OCI-LY7 (cell line): ENCODE measurements at regions of chr10 and their contacts with region 1.

Region 1: DNA sequence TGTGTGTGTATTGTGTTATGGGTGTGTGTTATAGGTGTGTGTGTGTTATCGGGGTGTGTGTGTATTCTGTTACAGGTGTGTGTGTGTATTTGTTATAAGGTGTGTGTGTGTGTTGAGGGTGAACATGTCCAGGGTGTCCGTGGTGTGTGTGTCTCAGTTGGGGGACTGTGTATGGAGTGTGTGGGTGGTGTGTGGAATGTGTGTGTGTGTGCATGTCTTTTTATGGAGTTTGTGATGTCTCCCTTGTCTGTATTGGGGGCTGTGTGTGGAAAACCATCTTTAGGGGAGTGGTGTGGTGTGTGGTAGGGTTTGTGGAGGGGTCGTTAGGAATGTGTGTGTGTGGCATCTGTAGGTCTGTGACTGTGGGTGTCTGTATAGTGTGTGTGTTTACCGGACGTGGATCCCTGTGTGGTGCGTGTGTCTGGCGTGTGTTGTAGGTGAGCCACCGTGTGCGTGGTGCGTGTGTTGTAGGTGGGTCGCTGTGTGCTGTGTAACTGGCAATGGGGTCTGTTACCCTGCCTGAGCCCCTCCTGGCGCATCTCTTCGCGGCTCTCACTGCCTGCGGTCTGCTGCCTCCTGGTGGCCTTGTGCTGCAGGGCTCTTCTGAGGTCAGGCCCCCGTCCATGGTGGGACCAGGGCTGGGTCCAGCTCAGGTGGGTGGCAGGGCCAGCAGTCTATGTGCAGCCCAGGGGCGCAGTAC is 61.7 kb downstream of the PALD1 start:
- DNase-seq: no peak
- H3K4me3 ChIP-seq: no peak overlapping the region
- H3K27ac ChIP-seq: no peak overlapping the region
- H3K4me1 ChIP-seq: peaks cover 38% of the 10 kb centered on the region
- CTCF ChIP-seq: peak; percentile 78

Region 2: DNA sequence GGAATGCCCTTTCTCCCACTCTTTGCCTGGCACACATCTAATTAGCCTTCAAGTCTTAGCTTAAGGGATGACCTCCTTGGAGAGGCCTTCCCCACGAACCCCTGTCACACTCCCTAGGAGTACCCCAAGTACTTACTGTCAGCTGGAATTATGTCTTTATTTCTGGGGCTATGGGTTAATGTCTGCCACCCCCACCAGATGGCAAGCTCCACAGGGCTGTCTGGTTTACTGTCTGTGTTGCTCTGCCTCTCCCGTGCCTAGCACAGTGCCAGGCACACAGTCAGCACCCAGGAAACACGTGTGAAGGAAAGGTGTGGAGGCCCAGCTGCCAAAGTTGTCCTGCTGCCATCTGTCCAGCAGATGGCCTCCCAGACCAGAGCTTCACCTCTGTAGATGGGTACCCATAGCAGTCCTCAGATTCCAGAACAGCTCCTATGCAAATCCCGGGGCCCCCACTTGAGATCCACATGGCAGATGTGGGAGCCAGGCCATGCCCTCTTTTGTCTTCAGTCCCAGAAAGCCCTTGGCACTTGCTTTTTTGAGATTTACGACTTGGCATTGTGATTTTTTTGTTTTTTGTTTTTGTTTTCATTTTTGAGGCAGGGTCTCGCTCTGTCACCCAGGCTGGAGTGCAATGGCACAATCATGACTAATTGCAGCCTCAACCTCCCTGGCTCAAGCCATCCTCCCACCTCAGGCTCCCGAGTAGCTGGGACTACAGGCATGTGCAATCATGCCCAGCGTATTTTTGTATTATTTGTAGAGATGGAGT is 78.8 kb before region 1 on chr10:
- CTCF ChIA-PET with region 1: interaction called, 3 read pairs
- POLR2A ChIA-PET with region 1: no interaction called
- intact Hi-C with region 1: loop called (anchors 1 kb)
- DNase-seq: peak; percentile 74
- H3K4me3 ChIP-seq: no peak overlapping the region
- H3K27ac ChIP-seq: no peak overlapping the region
- H3K4me1 ChIP-seq: no peaks in the 10 kb centered on the region
- CTCF ChIP-seq: peak; percentile 92

Region 3: GRCh38 chr10:70478191-70479164 is 61.8 kb before region 1 on chr10 and contains the start of gene PALD1:
- CTCF ChIA-PET with region 1: interaction called, 3 read pairs
- POLR2A ChIA-PET with region 1: interaction called, 4 read pairs
- intact Hi-C with region 1: loop called (anchors 1 kb)
- DNase-seq: peak; percentile 81
- H3K4me3 ChIP-seq: peak within 1 kb of the TSS; percentile 95
- H3K27ac ChIP-seq: peak within 1 kb of the TSS; percentile 74
- H3K4me1 ChIP-seq: peaks cover 62% of the 10 kb centered on the region
- CTCF ChIP-seq: no peak
- total RNA-seq, gene PALD1: 41.6 and 52.7 TPM in 2 replicates

Region 4: GRCh38 chr10:70551971-70552422 is 11.8 kb after region 1 on chr10:
- CTCF ChIA-PET with region 1: no interaction called
- POLR2A ChIA-PET with region 1: no interaction called
- intact Hi-C with region 1: no loop called
- DNase-seq: no peak
- H3K4me3 ChIP-seq: no peak overlapping the region
- H3K27ac ChIP-seq: no peak overlapping the region
- H3K4me1 ChIP-seq: peaks cover 5% of the 10 kb centered on the region
- CTCF ChIP-seq: no peak